ENCODE measurements at regions of chr1 and their contacts with region 1.

Region 1: DNA sequence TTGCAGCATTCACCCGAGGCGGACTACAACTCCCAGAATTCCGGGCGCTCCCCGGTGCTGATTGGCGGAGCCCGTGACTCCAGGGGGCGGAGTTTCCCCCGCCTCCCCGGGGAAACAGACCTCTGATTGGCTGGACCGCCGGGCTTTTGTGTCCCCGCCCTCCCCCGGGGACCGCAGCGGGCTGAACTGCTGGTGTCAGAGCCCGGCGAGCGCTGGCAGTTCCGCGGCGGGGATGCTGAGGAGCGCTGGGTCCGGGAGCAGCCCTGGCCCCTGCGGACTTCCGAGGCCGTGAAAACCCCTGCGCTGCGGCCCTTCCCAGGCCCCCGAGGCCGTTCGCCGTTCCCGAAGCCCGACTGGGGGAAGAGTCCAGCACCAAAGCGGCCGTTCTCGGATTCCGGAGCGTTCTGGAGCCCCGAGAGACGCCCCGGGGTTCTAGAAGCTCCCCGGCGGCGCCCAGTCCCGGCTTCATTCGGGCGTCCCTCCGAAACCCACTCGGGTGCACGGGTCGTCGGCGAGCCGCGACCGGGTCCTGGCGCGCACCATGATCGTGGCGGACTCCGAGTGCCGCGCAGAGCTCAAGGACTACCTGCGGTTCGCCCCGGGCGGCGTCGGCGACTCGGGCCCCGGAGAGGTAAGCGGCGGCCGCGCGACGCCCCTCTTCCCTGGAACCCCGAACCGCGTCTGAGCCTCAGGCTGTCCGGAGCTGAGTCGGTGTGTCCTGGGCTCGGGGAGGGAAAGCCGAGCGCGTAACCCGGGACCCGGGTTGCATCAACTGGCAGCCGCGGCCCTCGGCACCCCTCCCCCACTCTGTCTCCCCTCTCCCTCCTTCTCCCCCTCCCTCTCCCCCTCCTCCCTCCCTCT is at the start of gene SESN2:
- DNase-seq: peak; percentile 91
- H3K4me3 ChIP-seq: peak within 1 kb of the TSS; percentile 93
- CTCF ChIP-seq: no peak

Region 2: DNA sequence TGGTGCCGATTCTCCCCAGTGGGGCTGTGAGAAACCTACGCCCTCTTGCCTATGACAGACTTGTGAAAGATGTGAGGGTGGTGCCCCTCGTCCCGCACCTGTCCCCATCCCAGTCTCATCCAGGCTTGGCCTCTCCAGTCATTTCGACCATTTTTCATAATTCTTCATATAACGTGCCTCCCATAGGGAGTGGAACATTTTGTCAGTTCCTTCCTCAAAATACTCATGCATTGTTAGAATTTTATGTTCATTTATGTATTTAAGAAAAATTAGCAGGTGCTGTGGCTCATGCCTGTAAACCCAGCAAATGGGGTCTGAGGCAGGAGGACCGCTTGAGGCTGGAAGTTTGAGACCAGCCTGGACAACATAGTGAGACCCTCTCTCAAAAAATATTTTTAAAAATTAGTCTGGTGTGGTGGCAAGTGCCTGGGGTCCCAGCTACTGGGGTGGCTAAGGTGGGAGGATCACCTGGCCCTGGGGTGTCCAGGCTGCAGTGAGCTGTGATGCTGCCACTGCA is 344.4 kb before region 1 on chr1:
- CTCF ChIA-PET with region 1: no interaction called
- POLR2A ChIA-PET with region 1: no interaction called
- DNase-seq: no peak
- H3K4me3 ChIP-seq: peak overlapping the region; percentile 43
- CTCF ChIP-seq: no peak

Region 3: GRCh38 chr1:28235755-28236655 is 23.5 kb before region 1 on chr1 and contains the start of gene ATP5IF1:
- CTCF ChIA-PET with region 1: no interaction called
- POLR2A ChIA-PET with region 1: interaction called, 14 read pairs
- DNase-seq: peak; percentile 90
- H3K4me3 ChIP-seq: peak within 1 kb of the TSS; percentile 100
- CTCF ChIP-seq: no peak

Measured in AG04449 (cell line).